Lower leg skin (tissue), 4 donors: ENCODE measurements at regions of chr11 and their contacts with region 1.

Region 1: GRCh38 chr11:93895106-93895862 is 44.9 kb upstream of the VSTM5 start:
- DNase-seq: no peak
- H3K4me3 ChIP-seq: no peak overlapping the region
- CTCF ChIP-seq: no peak
- POLR2A ChIP-seq: no peak

Region 2: DNA sequence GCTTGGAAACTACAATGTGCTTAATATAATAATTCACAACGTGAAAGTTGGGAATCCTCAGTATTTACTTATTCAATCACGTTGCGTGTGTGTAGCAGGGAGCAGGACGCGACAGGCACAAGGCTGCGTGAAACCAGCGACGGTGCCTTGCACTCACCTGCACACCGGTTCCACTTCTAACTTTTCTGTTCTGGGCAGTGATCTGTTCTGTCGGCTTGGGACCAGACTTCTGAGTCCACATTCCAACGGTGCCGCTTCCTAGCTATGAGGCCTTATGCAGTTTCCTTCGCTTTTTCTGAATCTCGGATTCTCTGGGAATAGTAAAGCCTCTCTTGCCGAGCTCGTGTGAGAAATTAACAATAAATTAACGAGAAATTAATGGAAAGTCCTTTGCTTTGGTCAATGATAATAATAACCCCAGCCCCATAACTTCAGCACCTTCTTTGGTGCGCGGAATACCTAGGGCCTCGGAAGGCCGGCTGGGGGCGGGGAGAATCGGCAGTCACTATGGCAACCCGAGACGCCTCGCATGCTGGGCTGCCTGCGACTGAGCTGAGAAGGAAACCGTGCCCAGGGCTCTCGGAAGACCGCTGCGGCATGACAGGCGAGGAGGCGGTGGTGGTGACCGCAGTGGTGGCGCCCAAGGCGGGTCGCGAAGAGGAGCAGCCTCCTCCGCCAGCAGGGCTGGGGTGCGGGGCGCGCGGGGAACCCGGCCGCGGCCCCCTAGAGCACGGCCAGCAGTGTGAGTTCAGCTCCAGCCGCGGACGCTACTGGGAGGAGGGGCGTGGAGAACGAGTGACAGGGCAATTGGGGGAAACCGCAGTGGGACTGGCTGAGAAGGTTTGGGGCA is 616.9 kb after region 1 on chr11 and contains the start of gene C11orf97:
- intact Hi-C with region 1: loop called (anchors 10 kb)
- DNase-seq: no peak
- H3K4me3 ChIP-seq: peak within 1 kb of the TSS; percentile 10
- CTCF ChIP-seq: no peak
- POLR2A ChIP-seq: no peak
- total RNA-seq, gene C11orf97: not detected